Natural killer cell (primary cell): ENCODE measurements at regions of chr2 and their contacts with region 1.

Region 1: DNA sequence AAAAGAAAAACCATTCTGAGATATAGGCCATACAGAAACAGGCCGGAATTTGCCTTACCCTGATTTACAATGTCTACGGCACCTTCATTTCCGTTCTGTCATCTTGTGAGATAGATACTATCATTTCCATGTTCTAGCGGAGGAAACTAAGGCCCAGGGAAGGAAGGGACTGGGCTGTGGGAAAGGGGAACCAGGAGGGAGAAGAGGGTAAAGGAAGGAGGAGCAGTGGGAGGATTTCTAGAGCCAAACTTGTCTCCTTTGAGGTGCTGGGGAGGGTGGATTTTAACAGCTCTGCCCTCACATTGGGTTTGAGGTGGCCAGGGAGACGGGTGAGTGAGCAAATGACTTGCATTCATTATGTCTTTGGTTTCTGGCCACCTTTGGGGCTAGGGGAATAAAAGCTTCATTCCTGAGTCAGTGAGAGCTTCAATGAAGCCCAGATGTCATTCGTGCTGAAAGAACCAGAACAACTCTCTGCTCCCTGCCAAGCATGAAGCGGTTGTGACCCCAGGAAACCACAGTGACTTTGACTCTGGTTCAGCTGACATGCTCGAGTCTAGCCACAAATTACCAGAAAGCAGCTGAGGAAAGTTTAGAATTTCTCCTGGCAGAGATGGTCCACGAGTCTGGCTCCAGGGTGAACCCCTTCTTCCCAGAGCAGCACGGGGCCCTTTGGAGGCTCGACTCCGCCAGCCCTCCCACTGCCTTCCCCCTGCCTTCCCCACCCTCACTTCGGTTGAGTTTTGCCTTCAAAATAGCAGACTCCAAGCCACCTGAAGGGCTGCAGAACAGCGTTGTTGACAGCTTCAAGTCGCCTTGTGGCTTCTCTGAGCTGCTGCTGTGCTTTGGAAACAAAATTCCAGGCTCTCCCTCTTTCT is 3.8 kb downstream of the ACTG2 start:
- DNase-seq: peak; percentile 25 to 63
- ATAC-seq: peak; percentile 76 to 92 (median 88)
- H3K4me3 ChIP-seq: no peak overlapping the region
- H3K4me3 Mint-ChIP-seq: peak overlapping the region; percentile 72
- H3K27ac ChIP-seq: peak overlapping the region; percentile 79
- H3K27ac Mint-ChIP-seq: peak overlapping the region; percentile 83 to 97
- H3K4me1 ChIP-seq: peaks cover 22% of the 10 kb centered on the region
- H3K4me1 Mint-ChIP-seq: peaks cover 31% of the 10 kb centered on the region in 2 donors
- H3K27me3 ChIP-seq: no peaks in the 10 kb centered on the region
- H3K27me3 Mint-ChIP-seq: peaks cover 0 to 3% of the 10 kb centered on the region in 2 donors
- CTCF ChIP-seq: no peak

Region 2: DNA sequence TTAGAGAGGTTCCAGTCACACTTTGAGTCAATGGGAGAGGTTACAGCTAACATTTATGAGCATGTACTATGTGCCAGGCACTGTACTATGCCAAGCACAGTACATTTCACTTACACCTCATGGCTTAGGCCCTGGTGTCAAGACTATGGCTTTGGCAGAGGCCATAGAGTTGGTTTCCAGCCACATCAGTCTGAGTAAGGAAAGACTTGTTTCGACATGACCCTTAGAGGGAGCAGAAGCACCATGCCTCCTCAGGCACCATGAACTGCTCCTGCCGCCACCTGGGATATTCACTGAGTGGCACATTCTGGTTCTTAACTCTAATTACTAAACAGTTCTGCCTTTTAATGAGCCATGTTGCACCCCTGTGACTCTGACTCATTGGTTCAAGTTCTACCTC is 42.8 kb after region 1 on chr2:
- intact Hi-C with region 1: loop called (anchors 5 kb)
- DNase-seq: peak in 1 of 2 donors; percentile 64
- ATAC-seq: peak in 2 of 3 donors; percentile 50 to 60
- H3K4me3 ChIP-seq: no peak overlapping the region
- H3K4me3 Mint-ChIP-seq: no peak overlapping the region
- H3K27ac ChIP-seq: no peak overlapping the region
- H3K27ac Mint-ChIP-seq: peak overlapping the region; percentile 19 to 23
- H3K4me1 ChIP-seq: peaks cover 3% of the 10 kb centered on the region
- H3K4me1 Mint-ChIP-seq: peaks cover 51% of the 10 kb centered on the region in 2 donors
- H3K27me3 ChIP-seq: no peaks in the 10 kb centered on the region
- H3K27me3 Mint-ChIP-seq: no peaks in the 10 kb centered on the region
- CTCF ChIP-seq: no peak